ENCODE measurements at regions of chr2 and their contacts with region 1.

Region 1: GRCh38 chr2:109128048-109128465 is 948 bp upstream of the SH3RF3 start:
- DNase-seq: peak; percentile 27 to 86 (median 74)
- H3K4me3 ChIP-seq: peak overlapping the region; percentile 50 to 88 (median 69)
- H3K27ac ChIP-seq: peak overlapping the region in 50 of 59 donors; percentile 3 to 85 (median 70)
- H3K27me3 ChIP-seq: peaks cover 0 to 46% (median 0%) of the 10 kb centered on the region in 45 donors
- CTCF ChIP-seq: peak; percentile 67 to 97 (median 90)

Region 2: DNA sequence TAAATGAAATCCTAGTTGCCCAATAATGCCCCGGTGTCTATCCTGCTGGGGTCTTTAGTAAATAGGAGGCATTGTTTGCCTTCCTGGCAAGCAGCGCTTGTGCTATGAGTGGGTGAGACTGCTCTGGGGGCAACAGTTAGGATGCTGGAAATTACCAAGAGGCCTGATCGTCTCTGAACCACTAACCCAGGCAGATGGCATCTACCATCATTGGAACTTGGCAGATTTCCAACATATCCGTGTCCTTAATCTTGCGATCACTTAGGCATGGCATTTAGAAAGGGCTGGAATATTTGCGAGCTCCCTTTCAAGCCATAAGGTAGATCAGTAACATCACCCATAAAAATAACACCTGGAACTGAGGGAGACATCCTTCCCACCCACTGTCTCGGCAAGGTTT is 17.9 kb before region 1 on chr2:
- intact Hi-C with region 1: no loop called
- DNase-seq: no peak
- H3K4me3 ChIP-seq: no peak overlapping the region
- H3K27ac ChIP-seq: no peak overlapping the region
- H3K27me3 ChIP-seq: no peaks in the 10 kb centered on the region
- CTCF ChIP-seq: no peak

Region 3: GRCh38 chr2:109209412-109209811 is 81.4 kb after region 1 on chr2:
- intact Hi-C with region 1: loop called in 1 of 2 experiments (anchors 5 kb)
- DNase-seq: peak in 2 of 10 donors; percentile 16 to 45
- H3K4me3 ChIP-seq: no peak overlapping the region
- H3K27ac ChIP-seq: peak overlapping the region in 13 of 59 donors; percentile 3 to 59 (median 31)
- H3K27me3 ChIP-seq: no peaks in the 10 kb centered on the region
- CTCF ChIP-seq: no peak

Region 4: GRCh38 chr2:109348671-109349550 is 220.9 kb after region 1 on chr2:
- intact Hi-C with region 1: loop called in 1 of 2 experiments (anchors 10 kb)
- DNase-seq: no peak
- H3K4me3 ChIP-seq: peak overlapping the region in 4 of 59 donors; percentile 3 to 24 (median 14)
- H3K27ac ChIP-seq: peak overlapping the region in 55 of 59 donors; percentile 17 to 89 (median 72)
- H3K27me3 ChIP-seq: no peaks in the 10 kb centered on the region
- CTCF ChIP-seq: peak in 5 of 56 donors; percentile 4 to 21 (median 6)

Region 5: DNA sequence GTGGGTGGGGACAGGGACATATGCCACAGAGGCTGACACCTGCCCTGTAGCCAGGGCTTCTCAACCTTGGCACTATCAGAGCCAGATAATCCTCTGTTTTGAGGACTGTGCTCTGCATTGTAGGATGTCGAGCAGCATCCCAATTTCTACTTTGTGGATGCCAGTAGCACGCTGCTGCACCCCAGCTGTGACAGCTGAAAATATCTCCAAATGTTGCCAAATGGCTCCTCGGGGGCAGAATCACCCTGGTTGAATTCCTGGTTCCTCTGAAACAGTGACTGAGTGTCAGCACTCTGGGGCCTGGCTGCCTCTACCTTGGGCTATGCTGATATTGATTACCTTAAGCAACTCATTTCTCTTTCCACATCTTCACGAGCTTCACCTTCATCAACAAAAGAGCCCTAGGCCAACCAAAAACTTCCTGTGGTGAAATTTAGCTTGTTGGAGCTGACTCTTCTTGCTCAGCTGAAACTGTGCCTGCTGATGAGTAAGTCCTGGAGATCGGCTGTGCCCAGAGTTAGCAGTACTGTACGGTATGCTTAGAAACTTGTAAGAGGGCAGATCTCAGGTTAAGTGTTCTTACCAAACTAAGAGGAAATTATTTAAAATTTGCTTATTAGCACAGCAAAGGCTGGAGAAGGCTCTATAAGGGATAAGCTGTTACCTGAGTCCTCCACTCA is 347.6 kb after region 1 on chr2:
- intact Hi-C with region 1: loop called in 1 of 2 experiments (anchors 10 kb)
- DNase-seq: peak in 1 of 10 donors; percentile 49
- H3K4me3 ChIP-seq: no peak overlapping the region
- H3K27ac ChIP-seq: peak overlapping the region in 35 of 59 donors; percentile 1 to 76 (median 41)
- H3K27me3 ChIP-seq: no peaks in the 10 kb centered on the region
- CTCF ChIP-seq: peak in 13 of 56 donors; percentile 7 to 39 (median 18)

Region 6: GRCh38 chr2:109510136-109511028 is 382.3 kb after region 1 on chr2:
- intact Hi-C with region 1: loop called (anchors 1 to 2 kb)
- DNase-seq: peak; percentile 65 to 86 (median 74)
- H3K4me3 ChIP-seq: no peak overlapping the region
- H3K27ac ChIP-seq: no peak overlapping the region
- H3K27me3 ChIP-seq: no peaks in the 10 kb centered on the region
- CTCF ChIP-seq: peak; percentile 76 to 96 (median 91)